AG04450 (cell line): ENCODE measurements at regions of chr1 and their contacts with region 1.

Region 1: DNA sequence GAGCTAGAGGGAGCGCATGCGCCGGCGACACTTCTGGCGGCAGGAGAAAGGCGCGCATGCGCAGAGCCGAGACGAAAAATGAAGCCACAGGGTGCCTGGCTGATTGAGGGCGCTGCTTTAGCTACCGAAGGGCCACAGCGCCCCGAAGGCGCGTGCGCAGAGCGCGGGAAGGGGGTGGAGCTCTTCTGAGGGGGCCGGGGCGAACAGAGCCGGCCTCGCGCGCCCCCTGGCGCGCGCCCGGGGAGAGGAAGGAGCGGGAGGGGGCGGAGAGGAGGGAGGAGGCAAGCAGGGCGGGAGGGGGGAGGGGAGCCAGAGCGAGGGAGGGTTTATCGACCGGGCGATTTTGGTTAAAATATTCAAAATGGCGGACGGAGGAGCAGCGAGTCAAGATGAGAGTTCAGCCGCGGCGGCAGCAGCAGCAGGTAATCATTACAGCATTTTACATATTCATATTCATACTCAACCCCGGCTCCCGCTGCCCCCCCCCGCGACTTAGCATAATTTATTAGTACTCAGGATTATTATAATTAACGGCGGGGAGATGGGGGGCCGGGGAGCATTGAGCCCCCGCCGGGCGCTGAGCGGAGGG is at the start of gene POU2F1:
- DNase-seq: peak; percentile 94
- H3K4me3 ChIP-seq: peak within 1 kb of the TSS; percentile 99
- H3K27ac ChIP-seq: peak within 1 kb of the TSS; percentile 65
- H3K27me3 ChIP-seq: no peaks in the 10 kb centered on the region
- CTCF ChIP-seq: peak; percentile 59
- polyA plus RNA-seq, gene POU2F1: 2.7 and 2.8 TPM in 2 replicates

Region 2: GRCh38 chr1:166283190-166283589 is 937.4 kb before region 1 on chr1:
- CTCF ChIA-PET with region 1: no interaction called
- POLR2A ChIA-PET with region 1: no interaction called
- DNase-seq: no peak
- H3K4me3 ChIP-seq: no peak overlapping the region
- H3K27ac ChIP-seq: no peak overlapping the region
- H3K27me3 ChIP-seq: no peaks in the 10 kb centered on the region
- CTCF ChIP-seq: no peak

Region 3: DNA sequence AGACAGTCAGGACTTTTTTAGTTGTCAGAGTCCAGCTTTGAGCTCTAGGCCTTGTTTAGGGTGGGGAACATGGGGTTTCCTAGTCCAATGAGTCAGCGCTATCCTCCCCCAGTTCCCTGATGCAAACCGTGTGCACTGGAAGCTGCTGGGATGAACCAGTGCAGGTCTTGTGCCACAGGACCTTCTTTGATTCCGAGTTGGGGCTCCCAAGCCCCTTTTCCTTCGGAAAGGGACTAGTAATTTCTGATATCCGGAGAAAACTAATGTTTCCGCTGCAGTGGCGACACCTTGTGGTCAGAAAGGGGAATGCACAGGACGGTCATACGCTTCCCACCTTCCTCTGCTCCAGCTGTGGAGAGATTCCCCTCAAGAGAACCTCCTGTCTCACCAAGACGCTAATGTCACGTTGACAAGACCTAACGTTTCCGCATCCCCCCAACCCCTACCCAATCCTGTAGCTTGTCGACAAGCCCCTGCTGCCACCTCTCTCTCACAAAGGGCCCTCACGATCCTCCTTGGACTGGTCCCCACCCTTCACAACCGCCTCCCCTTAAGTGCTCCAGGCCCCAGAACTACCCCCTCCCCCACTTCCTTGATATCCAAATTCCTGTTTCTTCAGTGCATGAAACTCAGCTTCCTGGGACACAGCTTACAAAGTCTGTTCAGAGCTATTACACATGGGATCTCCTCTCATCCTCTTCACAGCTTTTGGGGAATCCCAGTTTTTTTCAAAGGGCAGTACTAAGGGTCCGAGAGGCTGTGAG is 161.4 kb before region 1 on chr1:
- CTCF ChIA-PET with region 1: interaction called, 11 read pairs
- POLR2A ChIA-PET with region 1: no interaction called
- DNase-seq: peak; percentile 27
- H3K4me3 ChIP-seq: no peak overlapping the region
- H3K27ac ChIP-seq: no peak overlapping the region
- H3K27me3 ChIP-seq: no peaks in the 10 kb centered on the region
- CTCF ChIP-seq: peak; percentile 97

Region 4: GRCh38 chr1:167207940-167208623 is 12.5 kb before region 1 on chr1:
- CTCF ChIA-PET with region 1: interaction called, 19 read pairs
- POLR2A ChIA-PET with region 1: no interaction called
- DNase-seq: no peak
- H3K4me3 ChIP-seq: no peak overlapping the region
- H3K27ac ChIP-seq: no peak overlapping the region
- H3K27me3 ChIP-seq: peaks cover 3% of the 10 kb centered on the region
- CTCF ChIP-seq: peak; percentile 21; the same call in 1 of the 2 replicates

Region 5: DNA sequence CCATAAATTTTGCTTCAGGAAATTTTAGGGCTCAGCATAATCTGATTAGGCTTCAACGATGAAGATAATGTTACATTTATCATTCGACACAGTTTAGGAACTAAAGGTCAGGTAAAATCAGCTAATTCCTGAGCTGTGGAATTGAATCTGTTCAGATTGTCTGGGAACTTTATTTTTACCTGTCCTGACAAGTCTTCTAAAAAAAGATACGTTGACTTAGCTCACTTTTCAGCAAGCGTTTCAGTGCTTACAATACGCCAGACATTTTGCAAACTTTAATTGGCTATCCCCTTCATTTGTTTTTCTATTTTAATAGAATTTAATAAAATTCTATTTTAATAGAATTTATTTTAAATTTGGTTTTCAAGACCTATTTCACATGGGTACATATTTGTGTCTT is 57.9 kb after region 1 on chr1:
- CTCF ChIA-PET with region 1: interaction called, 13 read pairs
- POLR2A ChIA-PET with region 1: no interaction called
- DNase-seq: no peak
- H3K4me3 ChIP-seq: no peak overlapping the region
- H3K27ac ChIP-seq: no peak overlapping the region
- H3K27me3 ChIP-seq: no peaks in the 10 kb centered on the region
- CTCF ChIP-seq: no peak

Region 6: DNA sequence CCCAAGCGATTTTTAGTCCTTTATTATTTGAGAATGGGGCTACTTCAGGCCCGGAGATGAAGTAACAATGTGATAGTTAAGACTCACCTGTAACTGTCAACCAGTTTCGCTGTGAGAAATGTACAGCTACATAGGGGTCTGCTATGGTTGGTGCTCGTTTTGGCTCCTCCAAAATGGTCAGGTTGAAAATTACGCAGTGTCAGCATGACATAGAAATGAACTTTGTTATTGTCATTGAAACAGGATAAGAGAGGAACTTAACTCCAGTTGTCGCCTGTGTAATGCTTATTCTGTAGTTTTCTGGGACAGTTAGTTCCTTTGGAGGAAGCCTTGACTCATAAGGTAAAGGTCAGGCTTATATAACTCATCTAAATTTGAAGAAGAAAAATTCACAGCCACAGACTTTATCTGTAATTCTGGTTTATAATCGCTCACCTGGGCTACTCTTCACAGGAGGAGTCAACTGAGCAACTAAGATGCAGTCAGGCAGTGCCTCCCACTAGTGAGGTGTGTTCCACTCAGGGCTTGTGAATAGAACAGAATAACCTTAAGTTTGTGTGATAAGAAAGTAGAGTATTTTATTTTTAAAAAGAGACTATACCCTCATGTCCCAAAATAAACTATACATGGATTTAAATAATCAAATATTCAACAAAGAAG is 166.8 kb after region 1 on chr1:
- CTCF ChIA-PET with region 1: interaction called, 22 read pairs
- POLR2A ChIA-PET with region 1: no interaction called
- DNase-seq: no peak
- H3K4me3 ChIP-seq: no peak overlapping the region
- H3K27ac ChIP-seq: no peak overlapping the region
- H3K27me3 ChIP-seq: no peaks in the 10 kb centered on the region
- CTCF ChIP-seq: no peak

Region 7: DNA sequence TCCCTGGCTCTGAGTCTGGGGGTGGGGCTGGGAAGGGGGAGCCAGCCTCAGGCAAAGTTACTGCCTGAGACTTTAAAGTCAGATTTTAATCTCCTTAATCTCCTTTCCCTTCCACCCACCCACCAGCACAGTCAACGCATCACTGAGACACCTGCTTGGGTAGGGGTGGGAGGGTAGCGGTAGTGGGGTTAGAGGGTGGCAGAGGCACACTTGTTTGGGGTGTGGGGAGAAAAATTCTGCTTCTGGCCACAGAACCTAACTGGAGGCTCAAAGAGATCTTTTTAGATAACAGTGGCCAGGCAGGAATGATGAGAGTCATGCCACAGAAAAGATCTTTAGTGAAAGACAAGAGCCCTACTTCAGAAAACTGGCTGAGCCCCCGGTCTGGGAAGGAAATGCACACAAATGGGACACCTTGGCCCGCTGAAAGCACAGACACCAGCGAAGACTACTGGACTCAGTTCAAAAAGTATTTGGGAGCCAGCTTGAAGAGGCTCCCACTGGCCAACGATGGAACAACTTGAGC is 253.6 kb after region 1 on chr1:
- CTCF ChIA-PET with region 1: interaction called, 11 read pairs
- POLR2A ChIA-PET with region 1: no interaction called
- DNase-seq: no peak
- H3K4me3 ChIP-seq: no peak overlapping the region
- H3K27ac ChIP-seq: no peak overlapping the region
- H3K27me3 ChIP-seq: peaks cover 4% of the 10 kb centered on the region
- CTCF ChIP-seq: no peak